ENCODE measurements at regions of chr6 and their contacts with region 1.

Region 1: DNA sequence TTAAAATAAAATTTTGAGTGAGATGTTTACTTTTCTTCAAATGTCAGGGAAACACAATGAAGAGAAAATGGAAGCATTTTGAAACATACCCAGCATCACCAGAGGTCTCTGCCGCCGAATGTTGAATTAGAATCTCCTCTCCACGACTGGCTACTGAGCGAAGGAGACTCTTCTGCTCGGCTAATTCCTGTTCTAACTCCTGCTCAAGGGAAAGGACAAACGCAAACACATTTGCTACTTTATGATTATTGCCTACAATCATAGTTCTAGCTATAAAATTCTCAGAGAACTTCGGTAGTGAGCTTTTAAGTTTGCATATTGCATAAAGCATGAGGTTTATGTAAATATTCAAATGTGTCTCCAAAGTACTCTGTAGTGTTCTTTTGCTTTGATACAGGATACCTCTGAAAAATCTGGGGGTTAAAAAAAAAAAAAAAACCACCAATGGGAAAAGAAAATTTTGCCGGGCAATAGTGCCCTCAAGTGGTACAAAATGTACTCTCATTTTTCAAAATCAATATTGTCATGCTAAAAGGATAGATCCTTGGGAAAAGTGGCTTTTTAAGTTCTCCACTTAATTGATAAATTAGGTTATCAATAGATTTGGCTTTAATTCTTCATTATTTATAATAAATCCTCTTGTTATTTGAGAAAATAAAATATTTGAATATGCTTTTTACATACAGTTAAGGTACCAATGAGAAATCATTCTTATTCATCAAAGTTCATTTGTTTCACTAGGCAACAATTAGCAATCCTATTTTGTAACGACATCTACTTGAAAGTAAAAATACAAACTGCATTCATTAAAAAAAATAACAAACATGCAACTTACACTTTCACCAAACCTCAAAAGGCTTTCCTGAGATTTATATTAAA is 369.0 kb downstream of the SYNE1 start:
- DNase-seq: no peak
- ATAC-seq: no peak

Region 2: DNA sequence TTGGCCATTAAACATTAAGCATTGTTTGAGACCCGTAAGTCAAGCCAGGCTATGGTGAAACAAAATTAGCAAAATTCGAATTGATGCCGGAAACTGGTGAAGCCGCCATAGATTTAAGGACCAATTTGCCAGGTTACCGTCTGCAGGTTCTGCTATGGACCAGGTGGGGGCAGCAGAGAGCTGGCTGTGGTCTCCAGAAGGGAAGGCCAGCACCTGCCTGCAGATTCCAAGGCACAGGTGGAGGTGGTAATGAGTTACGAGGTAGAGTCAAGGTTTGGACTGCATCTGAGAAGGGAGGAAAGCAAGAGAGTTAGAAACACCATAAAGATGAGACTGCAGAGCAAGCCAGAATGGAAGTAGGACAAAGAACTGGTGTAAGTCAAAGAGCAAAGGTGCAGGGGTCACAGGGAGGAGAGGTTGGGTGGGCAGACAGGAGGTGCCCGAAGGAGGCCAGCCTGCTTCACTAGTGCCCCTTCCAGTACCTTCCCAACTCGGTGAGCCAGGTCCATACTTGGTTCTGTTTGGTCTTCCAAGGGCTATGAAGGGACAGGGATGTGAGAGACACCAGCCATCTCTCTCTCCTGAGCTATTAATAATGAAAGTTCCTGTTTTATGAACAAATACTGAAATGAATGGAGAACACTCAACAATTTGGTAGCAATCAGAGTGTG is 592.3 kb before region 1 on chr6:
- intact Hi-C with region 1: loop called (anchors 10 kb)
- DNase-seq: no peak
- ATAC-seq: no peak

Region 3: DNA sequence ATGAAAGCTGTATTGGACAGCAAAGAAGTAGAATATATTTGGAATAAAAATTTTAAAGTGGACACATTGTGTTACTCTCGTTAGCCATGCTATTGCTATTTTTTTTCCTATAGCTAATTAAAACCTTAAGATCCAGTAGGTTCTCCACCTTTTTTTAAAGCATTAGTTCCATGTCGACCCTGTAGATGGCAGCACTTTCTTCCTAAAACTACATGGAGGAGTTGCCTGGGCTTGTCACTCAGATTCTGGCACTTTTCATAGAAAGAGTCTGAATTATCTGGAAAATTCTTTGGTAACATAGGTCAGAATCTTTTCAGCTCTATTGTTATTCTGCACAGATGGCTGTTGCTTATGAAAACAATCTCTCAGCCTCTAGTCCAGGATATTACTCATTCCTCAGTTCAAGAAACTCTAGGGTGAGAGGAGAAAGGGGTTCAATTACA is 502.7 kb before region 1 on chr6:
- intact Hi-C with region 1: loop called (anchors 10 kb)
- DNase-seq: no peak
- ATAC-seq: peak; percentile 38

Region 4: DNA sequence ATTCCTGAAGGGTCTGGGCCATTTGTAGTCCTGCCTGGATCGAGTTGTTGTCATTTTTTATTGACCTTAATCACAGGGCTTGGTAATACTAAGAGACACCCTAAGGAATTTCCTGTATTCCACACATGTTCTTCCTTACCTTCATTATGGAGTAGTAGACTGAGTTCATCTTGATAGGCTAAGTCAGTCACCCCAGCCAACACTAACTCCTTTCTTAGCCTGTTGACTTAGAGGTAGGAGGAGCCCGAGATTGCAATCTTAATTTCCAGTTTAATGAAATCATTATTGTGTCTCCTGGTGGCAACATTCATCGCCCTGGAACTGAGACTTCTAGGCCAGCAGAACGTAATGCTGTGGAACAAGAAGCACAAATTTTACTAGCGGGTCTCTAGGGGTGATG is 229.0 kb before region 1 on chr6:
- intact Hi-C with region 1: no loop called
- DNase-seq: no peak
- ATAC-seq: no peak

Region 5: GRCh38 chr6:152170705-152171667 is 97.2 kb before region 1 on chr6:
- intact Hi-C with region 1: loop called (anchors 5 kb)
- DNase-seq: no peak
- ATAC-seq: peak; percentile 20

Region 6: DNA sequence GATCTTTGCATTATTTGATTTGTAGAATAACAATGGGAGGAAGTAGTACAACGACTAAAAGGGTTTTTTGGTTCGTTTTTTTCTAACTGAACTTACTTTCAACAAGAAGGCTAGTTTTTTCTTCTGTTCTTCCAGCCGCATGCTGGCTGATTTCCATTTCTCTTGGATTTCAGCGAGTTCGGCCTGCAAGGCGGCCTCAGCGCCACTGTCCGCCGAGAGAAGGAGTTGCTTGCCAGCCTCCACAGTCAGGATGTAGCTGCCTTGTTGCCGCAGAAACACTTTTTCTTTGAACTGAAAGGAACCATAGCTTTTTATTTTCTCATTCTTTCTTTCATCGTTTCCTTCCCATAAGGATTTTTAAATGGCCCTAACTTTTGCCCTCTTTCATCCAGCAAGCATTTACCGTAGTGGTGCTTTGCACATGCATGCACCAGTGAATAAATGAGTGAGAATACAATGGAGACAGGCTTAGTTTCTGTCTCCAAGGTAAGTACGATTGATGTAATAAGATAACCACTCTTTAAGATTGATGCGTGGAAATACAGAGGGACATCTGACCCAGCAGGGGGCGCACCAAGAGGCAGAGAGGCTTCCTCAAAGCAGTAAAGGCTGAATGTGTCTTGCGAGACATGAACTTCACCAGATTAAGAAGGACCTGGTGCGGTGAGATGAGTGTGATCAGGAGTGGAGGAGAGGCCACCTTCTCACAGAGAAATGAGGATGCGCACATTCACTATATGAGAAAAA is 62.0 kb before region 1 on chr6:
- intact Hi-C with region 1: loop called (anchors 10 kb)
- DNase-seq: no peak
- ATAC-seq: no peak

Region 7: GRCh38 chr6:152380993-152381898 is 113.0 kb after region 1 on chr6:
- intact Hi-C with region 1: no loop called
- DNase-seq: peak; percentile 83
- ATAC-seq: peak; percentile 95